ENCODE measurements at regions of chr17 and their contacts with region 1.

Region 1: DNA sequence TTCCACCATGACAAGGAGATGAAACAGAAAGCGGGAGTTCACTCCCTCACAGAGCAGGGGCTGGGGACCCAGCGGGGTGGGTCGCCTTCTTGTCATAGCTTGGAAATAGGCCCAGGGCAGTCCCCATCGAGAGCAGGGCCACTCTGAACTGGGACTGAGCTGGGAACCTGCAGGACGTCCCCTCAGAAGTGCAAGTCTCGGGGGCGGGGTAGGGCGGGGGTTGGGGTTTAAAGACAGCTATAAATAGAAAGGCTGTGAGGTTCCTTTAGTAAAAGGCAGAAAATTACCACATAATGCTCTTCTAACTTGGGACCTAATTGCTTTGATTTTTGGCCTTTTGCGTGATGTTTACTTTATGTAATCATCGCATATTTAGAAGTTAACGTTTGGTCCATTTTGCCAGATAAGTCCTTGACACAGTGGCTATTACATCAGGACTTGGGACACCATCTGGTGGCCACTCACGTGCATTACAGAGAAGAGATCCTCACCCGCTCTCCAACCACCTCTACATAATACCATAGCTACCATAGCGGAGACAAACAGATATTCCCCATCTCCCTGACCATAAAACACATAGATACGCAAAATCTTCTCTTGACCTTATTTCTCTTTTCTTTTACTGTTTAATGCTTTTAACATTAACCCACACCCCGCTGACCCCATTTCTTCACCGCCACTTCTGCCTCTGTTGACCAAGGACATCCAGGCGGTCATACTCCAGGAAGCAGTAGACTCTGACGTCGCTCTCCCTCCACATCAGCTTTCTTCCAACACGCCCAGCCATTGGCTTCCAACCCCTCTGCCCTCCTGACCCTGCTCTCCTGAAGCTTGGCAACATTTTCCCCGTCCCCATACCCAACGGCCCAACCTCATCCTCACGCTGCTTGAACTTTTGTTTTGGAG is 27.5 kb upstream of the PIK3R6 start:
- DNase-seq: peak in 1 of 2 donors; percentile 61
- ATAC-seq: peak; percentile 72 to 91 (median 82)
- H3K4me3 ChIP-seq: peak overlapping the region in 2 of 10 donors; percentile 9 to 13
- H3K27ac ChIP-seq: no peak overlapping the region
- H3K4me1 ChIP-seq: peaks cover 0 to 39% (median 0%) of the 10 kb centered on the region in 9 donors
- H3K27me3 ChIP-seq: peaks cover 0 to 13% (median 0%) of the 10 kb centered on the region in 7 donors
- CTCF ChIP-seq: peak; percentile 73 to 91 (median 85)

Region 2: DNA sequence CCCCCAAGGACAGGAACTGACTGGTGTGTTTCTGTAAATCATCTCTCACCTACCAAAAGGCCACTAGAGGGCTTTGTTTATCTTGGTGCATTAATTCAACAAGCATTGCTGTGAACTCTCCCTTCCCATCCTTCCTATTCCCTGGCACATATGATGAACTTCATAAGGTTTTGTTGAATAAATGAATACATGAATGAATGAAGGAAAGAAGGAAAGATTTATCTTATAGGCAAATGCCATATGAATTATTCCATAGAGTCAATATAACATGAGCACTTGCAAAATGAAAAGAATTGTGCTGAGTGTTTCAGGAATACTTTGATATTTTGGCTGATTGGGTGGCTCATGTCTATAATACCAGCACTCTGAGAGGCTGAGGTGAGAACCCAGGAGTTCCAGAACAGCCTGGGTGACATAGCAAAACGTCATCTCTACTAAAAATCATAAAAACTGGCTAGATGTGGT is 140.9 kb before region 1 on chr17:
- intact Hi-C with region 1: loop called in 2 of 10 experiments (anchors 10 kb)
- DNase-seq: no peak
- ATAC-seq: no peak
- H3K4me3 ChIP-seq: no peak overlapping the region
- H3K27ac ChIP-seq: no peak overlapping the region
- H3K4me1 ChIP-seq: peaks cover 0 to 5% (median 0%) of the 10 kb centered on the region in 9 donors
- H3K27me3 ChIP-seq: peaks cover 0 to 18% (median 0%) of the 10 kb centered on the region in 7 donors
- CTCF ChIP-seq: peak in 5 of 9 donors; percentile 12 to 36 (median 20)

Region 3: GRCh38 chr17:8785547-8786413 is 109.1 kb before region 1 on chr17:
- intact Hi-C with region 1: loop called in 1 of 10 experiments (anchors 5 kb)
- DNase-seq: peak; percentile 80 to 83
- ATAC-seq: peak; percentile 80 to 93 (median 89)
- H3K4me3 ChIP-seq: no peak overlapping the region
- H3K27ac ChIP-seq: no peak overlapping the region
- H3K4me1 ChIP-seq: peaks cover 0 to 20% (median 0%) of the 10 kb centered on the region in 9 donors
- H3K27me3 ChIP-seq: no peaks in the 10 kb centered on the region
- CTCF ChIP-seq: peak; percentile 48 to 94 (median 88)

Region 4: GRCh38 chr17:8806926-8807550 is 87.9 kb before region 1 on chr17:
- intact Hi-C with region 1: loop called in 8 of 10 experiments (anchors 5 to 10 kb)
- DNase-seq: no peak
- ATAC-seq: peak in 5 of 8 donors; percentile 17 to 48 (median 20)
- H3K4me3 ChIP-seq: no peak overlapping the region
- H3K27ac ChIP-seq: peak overlapping the region in 2 of 10 donors; percentile 9 to 82
- H3K4me1 ChIP-seq: peaks cover 0 to 15% (median 0%) of the 10 kb centered on the region in 9 donors
- H3K27me3 ChIP-seq: no peaks in the 10 kb centered on the region
- CTCF ChIP-seq: no peak

Region 5: GRCh38 chr17:8867361-8867981 is 27.5 kb before region 1 on chr17 and contains the start of gene PIK3R6:
- intact Hi-C with region 1: no loop called
- DNase-seq: no peak
- ATAC-seq: peak in 6 of 8 donors; percentile 41 to 68 (median 50)
- H3K4me3 ChIP-seq: peak within 1 kb of the TSS in 9 of 10 donors; percentile 7 to 60 (median 48)
- H3K27ac ChIP-seq: peak within 1 kb of the TSS in 6 of 10 donors; percentile 3 to 84 (median 47)
- H3K4me1 ChIP-seq: peaks cover 0 to 49% (median 8%) of the 10 kb centered on the region in 9 donors
- H3K27me3 ChIP-seq: no peaks in the 10 kb centered on the region
- CTCF ChIP-seq: no peak
- total RNA-seq, gene PIK3R6: 0.32 to 3.4 (median 1.0) TPM

Measured in heart right ventricle (tissue), 16 donors.